ENCODE measurements at regions of chr5 and their contacts with region 1.

Region 1: GRCh38 chr5:91383027-91383955 is at the start of gene ARRDC3:
- DNase-seq: peak; percentile 96 to 98
- ATAC-seq: peak; percentile 64
- total RNA-seq, gene ARRDC3: 14.5 to 33.0 TPM

Region 2: DNA sequence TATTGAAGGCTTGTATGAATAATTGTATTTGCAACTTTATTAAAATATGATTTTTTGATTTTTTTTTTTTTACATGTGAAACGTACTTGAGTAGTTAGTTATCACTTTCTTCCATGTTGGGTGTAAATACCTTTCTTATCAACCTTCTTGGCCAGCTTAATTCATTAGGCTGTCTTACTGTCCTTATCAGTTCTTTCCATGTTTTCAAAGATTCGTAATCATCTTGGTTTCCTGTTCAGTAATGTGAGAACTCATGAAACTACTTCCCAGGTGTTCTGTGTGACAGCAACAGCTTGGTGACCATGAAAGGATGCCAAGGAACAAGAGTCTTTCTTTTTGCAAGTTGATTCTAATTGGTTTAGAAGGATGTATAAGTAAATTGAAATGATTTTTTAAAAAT is 724.7 kb before region 1 on chr5:
- intact Hi-C with region 1: no loop called
- DNase-seq: no peak
- ATAC-seq: no peak

Region 3: DNA sequence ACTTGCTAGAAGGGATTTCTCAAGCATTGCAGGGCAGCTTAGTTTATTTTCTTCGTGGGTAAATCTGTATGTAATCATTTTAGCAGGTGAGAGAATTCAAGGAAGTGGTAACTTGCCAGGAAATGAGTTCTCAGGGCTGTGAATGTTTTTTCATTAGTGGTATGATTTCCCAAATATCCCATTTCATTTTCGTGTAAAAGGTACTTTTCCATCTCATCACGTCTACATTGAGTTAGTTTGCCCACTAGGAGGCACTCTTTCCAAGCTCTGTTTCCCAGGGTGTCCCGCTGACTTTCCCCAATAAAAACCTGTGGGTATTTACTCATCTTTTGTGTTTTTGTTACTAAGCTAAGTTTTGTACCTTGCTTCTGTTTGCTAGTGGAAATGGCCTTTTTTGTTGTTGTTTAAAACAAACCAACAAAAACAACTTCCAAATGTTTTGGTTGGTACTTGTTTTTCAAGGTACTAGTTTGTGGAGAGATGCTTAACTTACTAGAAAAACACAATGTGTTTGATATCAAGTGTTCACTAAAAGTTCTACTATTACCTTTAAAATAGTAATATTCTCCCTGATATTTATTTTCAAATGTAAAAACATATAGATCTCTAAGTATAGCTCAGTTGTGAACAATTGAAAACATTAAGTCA is 451.1 kb before region 1 on chr5:
- intact Hi-C with region 1: loop called in 1 of 2 experiments (anchors 5 kb)
- DNase-seq: peak; percentile 13 to 31
- ATAC-seq: peak; percentile 74

Region 4: DNA sequence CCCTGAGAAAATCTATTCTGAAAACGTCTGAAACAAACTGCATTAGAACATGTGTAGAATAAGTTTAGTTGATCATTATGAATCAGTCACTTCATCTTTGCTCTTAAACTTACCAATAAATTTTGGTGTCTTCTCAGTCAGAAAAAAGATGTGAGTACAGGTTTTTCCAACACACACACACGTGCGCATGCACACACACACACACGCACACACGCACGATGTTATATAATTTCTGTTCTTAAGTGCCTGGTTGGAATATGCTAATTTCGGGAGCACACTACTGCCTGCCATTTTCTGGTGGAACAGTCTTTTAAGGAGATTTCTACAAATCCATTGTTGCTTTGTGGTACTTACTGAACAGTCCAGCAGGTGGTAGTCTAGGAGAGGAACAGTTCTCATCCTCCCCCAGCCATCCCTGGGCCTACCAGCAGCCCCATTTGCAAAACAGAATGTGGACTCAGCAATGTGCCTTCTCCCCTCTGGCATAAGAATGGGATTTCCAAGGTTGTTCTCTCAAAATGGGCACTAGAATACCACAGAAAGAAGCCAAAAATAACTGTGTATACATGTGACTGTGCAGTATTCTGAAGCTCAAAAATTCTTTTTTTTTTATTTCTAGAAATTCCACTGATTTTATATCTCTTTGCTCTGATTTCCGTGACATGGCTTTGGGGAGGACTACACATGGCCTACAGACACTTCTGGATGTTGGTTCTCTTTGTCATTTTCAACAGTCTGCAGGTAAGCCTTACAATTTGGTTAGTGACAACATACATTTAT is 281.5 kb before region 1 on chr5:
- intact Hi-C with region 1: loop called (anchors 2 to 10 kb)
- DNase-seq: peak; percentile 66 to 68
- ATAC-seq: peak; percentile 92

Region 5: GRCh38 chr5:91225848-91226686 is 157.2 kb before region 1 on chr5:
- intact Hi-C with region 1: loop called in 1 of 2 experiments (anchors 10 kb)
- DNase-seq: peak; percentile 33 to 68
- ATAC-seq: peak; percentile 79

Region 6: DNA sequence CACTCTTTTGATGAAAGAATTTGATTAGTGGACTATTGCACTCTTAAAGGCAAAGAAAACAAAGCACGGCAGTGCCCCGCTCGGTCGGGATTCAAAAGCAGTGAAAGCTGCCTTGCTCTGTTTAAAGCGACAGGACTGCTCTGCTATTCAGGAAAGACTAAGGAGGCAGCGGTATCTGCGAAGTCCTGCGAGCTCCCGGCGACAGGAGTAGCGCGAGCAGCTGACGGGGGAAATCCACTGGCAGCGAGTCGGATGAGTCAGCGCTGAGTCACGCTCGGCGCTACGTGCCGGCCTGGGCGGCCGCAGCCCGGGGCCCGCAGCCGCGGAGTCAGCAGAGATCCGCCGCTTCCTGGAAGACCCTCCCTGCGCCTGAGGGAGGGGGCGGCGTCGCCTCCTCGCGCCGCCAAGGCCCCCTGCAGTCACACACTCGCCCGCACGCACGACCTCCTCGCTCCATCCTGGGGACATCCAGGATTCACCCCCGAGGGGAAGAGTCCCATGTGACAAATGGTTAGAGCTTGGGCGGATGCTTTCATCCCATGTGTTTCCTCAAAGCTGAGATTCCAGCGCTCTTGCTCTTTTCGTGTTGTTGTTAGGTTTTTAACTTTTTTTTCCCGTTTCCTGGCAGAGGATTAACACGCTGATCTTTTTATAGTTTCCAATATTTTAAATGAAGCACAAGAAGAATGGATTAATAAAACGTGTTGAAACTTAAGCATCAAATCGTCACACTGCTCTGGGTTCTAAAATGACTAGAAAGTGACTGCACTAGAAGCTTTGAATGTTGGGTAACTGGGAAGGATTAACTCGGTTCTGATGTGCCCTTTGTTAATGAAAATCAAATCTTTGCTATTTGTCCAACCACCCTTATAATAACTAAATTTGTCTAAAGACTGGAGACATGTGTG is 102.7 kb before region 1 on chr5:
- intact Hi-C with region 1: loop called in 1 of 2 experiments (anchors 5 kb)
- DNase-seq: peak; percentile 92 to 94
- ATAC-seq: peak; percentile 95